ENCODE measurements at regions of chr1 and their contacts with region 1.

Region 1: GRCh38 chr1:6052543-6053205 is 7.0 kb downstream of the KCNAB2 start:
- DNase-seq: peak; percentile 77
- H3K4me3 ChIP-seq: no peak overlapping the region
- H3K27ac ChIP-seq: no peak overlapping the region
- H3K4me1 ChIP-seq: no peaks in the 10 kb centered on the region
- H3K27me3 ChIP-seq: no peaks in the 10 kb centered on the region
- CTCF ChIP-seq: peak; percentile 69

Region 2: DNA sequence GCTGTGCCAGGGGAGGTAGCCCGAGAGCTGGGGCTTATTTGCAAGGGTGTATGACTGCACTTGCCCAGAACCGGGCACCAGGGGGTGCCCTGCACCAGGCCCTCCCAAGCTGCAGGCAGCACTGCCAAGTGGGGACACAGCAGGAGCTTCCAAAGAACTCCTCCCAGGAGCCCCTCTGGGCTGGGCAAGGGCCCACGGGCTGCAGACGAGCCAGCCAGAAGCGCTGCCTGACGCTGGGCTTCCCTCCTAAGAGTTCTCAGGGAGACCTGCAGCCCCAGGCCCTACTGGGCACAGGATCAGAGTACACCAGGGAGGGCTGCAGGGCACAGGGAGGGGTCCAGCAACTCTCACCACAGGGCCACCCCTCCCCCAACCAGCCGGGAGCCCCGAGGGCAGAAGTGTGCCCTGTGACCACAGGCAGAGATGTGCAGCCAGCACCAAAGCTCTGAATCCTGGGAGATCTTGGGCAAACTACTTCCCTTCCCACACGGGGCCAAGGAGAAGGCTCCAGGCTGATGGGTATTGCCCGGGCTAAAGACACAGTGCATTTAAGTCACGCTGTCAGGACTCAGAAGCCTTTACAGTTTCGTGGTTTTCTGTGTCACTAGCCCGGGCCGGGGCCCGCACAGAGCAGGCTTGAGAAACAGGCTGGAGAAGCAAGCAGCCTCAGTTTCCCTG is 56.4 kb after region 1 on chr1:
- CTCF ChIA-PET with region 1: no interaction called
- POLR2A ChIA-PET with region 1: no interaction called
- intact Hi-C with region 1: no loop called
- DNase-seq: peak; percentile 77
- H3K4me3 ChIP-seq: no peak overlapping the region
- H3K27ac ChIP-seq: no peak overlapping the region
- H3K4me1 ChIP-seq: no peaks in the 10 kb centered on the region
- H3K27me3 ChIP-seq: no peaks in the 10 kb centered on the region
- CTCF ChIP-seq: peak; percentile 66

Region 3: DNA sequence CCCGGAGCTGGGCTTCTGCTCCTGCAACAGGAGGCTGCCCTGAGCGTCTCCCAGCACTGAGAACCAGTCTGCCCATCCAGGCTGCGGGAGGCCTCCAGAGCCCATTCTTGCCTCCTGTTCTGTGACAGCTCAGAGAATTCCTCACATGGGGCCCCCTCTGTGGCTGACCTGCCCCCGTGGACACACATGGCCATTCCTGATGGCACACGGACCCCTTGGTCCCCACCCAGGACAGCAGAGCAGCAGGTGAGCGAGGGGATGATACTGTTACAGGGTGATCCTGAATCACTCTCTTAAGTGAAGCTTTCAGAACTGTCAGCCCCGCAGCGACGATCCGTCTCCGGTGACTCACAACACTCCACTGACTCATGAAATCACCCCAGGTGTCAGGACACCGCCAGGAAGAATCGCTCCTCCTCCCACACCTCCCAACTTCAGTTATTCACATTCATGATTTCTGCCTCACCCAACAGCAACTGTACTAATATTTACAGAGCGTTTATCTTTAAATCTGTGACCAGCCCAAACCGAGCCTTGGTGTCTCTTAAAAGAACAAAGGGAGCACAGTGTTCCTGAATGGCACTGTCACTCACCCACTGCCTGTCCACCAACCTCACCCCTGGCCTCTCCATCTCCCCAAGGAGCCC is 105.0 kb after region 1 on chr1:
- CTCF ChIA-PET with region 1: no interaction called
- POLR2A ChIA-PET with region 1: no interaction called
- intact Hi-C with region 1: loop called (anchors 1 kb)
- DNase-seq: peak; percentile 37
- H3K4me3 ChIP-seq: no peak overlapping the region
- H3K27ac ChIP-seq: no peak overlapping the region
- H3K4me1 ChIP-seq: no peaks in the 10 kb centered on the region
- H3K27me3 ChIP-seq: peaks cover 5% of the 10 kb centered on the region
- CTCF ChIP-seq: no peak